ENCODE measurements at regions of chr18 and their contacts with region 1.

Region 1: DNA sequence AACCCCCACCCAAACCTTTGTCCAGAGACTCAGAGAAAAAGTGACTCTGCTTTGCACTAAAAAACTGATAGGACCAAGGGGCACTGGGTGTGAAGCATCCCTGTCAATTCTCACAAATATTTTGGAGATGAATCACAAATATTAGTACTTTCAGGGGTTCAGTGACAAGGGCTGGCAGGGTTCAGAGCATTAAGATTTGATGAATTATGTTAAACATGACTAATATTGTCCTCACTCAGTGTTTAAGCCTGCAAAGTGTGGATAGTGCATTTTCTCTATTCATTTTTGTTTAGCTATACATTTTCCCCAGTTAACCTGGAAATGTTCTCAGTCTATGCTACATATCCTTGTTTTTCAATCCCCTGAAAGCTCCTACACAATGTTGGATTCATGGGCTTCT is 65.3 kb upstream of the CCDC68 start:
- DNase-seq: no peak
- H3K4me3 ChIP-seq: no peak overlapping the region
- H3K27ac ChIP-seq: no peak overlapping the region
- H3K27me3 ChIP-seq: peaks cover 0 to 3% (median 0%) of the 10 kb centered on the region in 45 donors
- CTCF ChIP-seq: no peak

Region 2: GRCh38 chr18:54888933-54889332 is 135.6 kb before region 1 on chr18:
- intact Hi-C with region 1: no loop called
- DNase-seq: no peak
- H3K4me3 ChIP-seq: no peak overlapping the region
- H3K27ac ChIP-seq: peak overlapping the region in 4 of 59 donors; percentile 14 to 29 (median 18)
- H3K27me3 ChIP-seq: no peaks in the 10 kb centered on the region
- CTCF ChIP-seq: no peak

Region 3: GRCh38 chr18:55087998-55088401 is 63.4 kb after region 1 on chr18:
- intact Hi-C with region 1: loop called in 1 of 2 experiments (anchors 10 kb)
- DNase-seq: no peak
- H3K4me3 ChIP-seq: no peak overlapping the region
- H3K27ac ChIP-seq: no peak overlapping the region
- H3K27me3 ChIP-seq: no peaks in the 10 kb centered on the region
- CTCF ChIP-seq: no peak